WTC11 (cell line): ENCODE measurements at regions of chr3 and their contacts with region 1.

Region 1: GRCh38 chr3:39288300-39288808 is 8.5 kb upstream of the CX3CR1 start:
- DNase-seq: peak; percentile 94
- ATAC-seq: peak; percentile 98
- H3K4me3 Mint-ChIP-seq: no peak overlapping the region
- H3K27ac Mint-ChIP-seq: no peak overlapping the region
- H3K4me1 Mint-ChIP-seq: peaks cover 5% of the 10 kb centered on the region
- H3K27me3 Mint-ChIP-seq: no peaks in the 10 kb centered on the region
- CTCF ChIP-seq: peak; percentile 47; the same call in 1 of the 2 replicates

Region 2: GRCh38 chr3:39101022-39101689 is 187.2 kb before region 1 on chr3:
- CTCF ChIA-PET with region 1: interaction called, 37 read pairs
- POLR2A ChIA-PET with region 1: no interaction called
- DNase-seq: peak; percentile 55
- ATAC-seq: peak; percentile 83
- H3K4me3 Mint-ChIP-seq: no peak overlapping the region
- H3K27ac Mint-ChIP-seq: no peak overlapping the region
- H3K4me1 Mint-ChIP-seq: peaks cover 10% of the 10 kb centered on the region
- H3K27me3 Mint-ChIP-seq: no peaks in the 10 kb centered on the region
- CTCF ChIP-seq: peak; percentile 50

Region 3: GRCh38 chr3:39146984-39147591 is 141.3 kb before region 1 on chr3:
- CTCF ChIA-PET with region 1: interaction called, 12 read pairs
- POLR2A ChIA-PET with region 1: no interaction called
- DNase-seq: no peak
- ATAC-seq: no peak
- H3K4me3 Mint-ChIP-seq: no peak overlapping the region
- H3K27ac Mint-ChIP-seq: peak overlapping the region; percentile 73
- H3K4me1 Mint-ChIP-seq: peaks cover 60% of the 10 kb centered on the region
- H3K27me3 Mint-ChIP-seq: no peaks in the 10 kb centered on the region
- CTCF ChIP-seq: no peak

Region 4: DNA sequence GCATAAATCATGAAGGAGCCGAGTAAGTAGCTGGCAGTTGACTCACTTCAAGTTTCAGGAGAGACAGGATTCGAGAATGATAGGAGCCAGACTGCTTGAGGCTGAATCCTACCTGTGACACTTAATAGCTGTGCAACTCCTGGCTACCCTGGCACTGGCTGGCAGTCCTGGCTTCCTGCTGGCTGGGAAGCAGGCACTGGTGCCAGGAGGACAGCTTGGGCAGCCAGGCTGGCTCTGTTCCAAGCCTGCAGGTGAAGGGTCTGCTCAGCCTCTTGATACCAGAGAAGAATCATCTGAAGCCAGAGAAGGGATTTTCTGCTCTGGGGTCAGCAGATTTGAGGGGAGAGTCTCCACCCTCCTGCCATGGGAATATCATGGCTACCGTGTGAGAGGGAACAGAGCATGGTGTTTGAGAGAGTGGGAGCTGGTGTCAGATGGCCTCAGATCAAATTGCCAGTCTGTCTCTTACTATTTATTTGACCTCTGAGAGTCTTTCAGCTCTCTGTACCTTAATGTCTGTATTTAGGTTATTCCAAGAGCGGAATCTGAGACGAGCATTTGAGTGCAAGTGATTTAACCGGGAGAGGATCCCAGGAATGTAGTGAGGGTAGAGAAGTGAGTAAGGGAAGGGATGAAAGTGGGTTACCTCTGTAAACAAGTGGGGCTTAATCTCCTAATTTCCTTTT is 91.5 kb before region 1 on chr3:
- CTCF ChIA-PET with region 1: interaction called, 291 read pairs
- POLR2A ChIA-PET with region 1: no interaction called
- DNase-seq: no peak
- ATAC-seq: no peak; the same call in 1 of the 2 replicates
- H3K4me3 Mint-ChIP-seq: no peak overlapping the region
- H3K27ac Mint-ChIP-seq: no peak overlapping the region
- H3K4me1 Mint-ChIP-seq: peaks cover 8% of the 10 kb centered on the region
- H3K27me3 Mint-ChIP-seq: no peaks in the 10 kb centered on the region
- CTCF ChIP-seq: no peak

Region 5: DNA sequence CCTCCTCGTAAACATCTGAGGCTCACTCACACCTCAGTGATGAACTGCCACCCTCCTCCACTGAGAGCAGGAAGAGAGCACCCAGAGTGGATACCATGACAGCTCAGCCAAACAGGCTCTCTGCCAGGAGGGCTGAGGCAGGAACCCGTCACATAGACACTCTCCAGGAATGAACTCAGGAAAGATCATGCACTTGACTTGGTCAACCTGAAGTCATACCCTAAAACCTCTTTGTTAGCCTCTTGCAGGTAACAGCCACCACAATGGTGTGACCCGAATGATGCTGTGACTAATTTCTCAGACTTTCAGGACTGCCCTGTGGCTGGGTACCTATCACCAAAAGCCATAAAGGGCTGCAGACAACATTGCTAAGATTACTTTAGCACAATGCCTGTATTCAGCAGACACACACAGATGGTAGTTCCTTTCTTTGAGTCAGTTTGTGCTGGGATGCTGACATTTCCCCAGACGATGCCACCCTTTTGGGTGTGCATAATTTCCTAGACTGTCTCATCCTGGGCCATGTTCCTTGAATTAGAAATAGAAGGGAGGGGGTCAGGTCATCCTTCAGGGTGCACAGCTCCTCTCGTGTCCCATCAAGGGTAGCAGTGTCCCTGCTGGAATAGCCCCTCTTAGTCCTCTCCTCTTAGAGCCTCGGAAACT is 38.8 kb before region 1 on chr3:
- CTCF ChIA-PET with region 1: interaction called, 10 read pairs
- POLR2A ChIA-PET with region 1: no interaction called
- DNase-seq: no peak
- ATAC-seq: no peak
- H3K4me3 Mint-ChIP-seq: no peak overlapping the region
- H3K27ac Mint-ChIP-seq: no peak overlapping the region
- H3K4me1 Mint-ChIP-seq: no peaks in the 10 kb centered on the region
- H3K27me3 Mint-ChIP-seq: no peaks in the 10 kb centered on the region
- CTCF ChIP-seq: no peak

Region 6: GRCh38 chr3:39358333-39358732 is 70.0 kb after region 1 on chr3:
- CTCF ChIA-PET with region 1: interaction called, 10 read pairs
- POLR2A ChIA-PET with region 1: no interaction called
- DNase-seq: no peak
- ATAC-seq: no peak
- H3K4me3 Mint-ChIP-seq: no peak overlapping the region
- H3K27ac Mint-ChIP-seq: no peak overlapping the region
- H3K4me1 Mint-ChIP-seq: peaks cover 4% of the 10 kb centered on the region; the same call in 1 of the 2 replicates
- H3K27me3 Mint-ChIP-seq: no peaks in the 10 kb centered on the region
- CTCF ChIP-seq: no peak